WTC11 (cell line): ENCODE measurements at regions of chr4 and their contacts with region 1.

Region 1: DNA sequence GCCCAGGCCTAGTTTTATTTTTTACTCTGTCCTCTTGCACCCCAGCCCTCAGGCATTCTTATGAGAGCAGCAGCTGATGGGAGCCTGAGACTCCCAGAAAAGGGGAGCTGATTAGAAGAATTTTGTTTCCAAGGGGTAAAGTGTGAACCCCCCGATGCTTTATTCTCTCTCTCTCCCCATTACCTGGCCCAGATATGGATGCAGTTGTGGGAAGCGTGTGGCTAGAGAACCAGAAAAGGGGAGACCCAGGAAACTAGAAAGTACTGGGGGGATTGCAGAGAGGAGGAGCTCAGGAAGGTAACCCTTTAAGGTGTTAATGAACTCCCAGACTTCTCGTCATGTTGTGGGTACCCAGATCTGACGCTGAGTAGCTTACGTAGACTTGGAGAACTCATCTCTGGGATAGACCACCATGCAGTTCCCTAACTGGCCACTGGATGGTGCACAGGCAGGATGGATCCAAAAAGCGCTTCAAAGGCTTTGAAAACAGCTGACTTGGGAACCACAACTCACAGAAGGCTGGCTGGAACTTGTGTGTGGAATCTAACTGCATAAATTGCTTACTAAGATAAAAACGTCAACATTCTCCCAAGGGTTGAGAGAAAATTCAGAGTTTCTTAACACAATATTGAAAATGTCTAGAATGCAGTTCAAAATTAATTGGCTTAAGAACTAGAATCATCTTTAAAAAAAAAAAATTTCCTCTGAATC is 64.7 kb downstream of the TBC1D14 start:
- DNase-seq: peak; percentile 95
- ATAC-seq: peak; percentile 80
- H3K4me3 Mint-ChIP-seq: no peak overlapping the region
- H3K27ac Mint-ChIP-seq: peak overlapping the region; percentile 78
- H3K4me1 Mint-ChIP-seq: peaks cover 37% of the 10 kb centered on the region
- H3K27me3 Mint-ChIP-seq: no peaks in the 10 kb centered on the region
- CTCF ChIP-seq: peak; percentile 95

Region 2: DNA sequence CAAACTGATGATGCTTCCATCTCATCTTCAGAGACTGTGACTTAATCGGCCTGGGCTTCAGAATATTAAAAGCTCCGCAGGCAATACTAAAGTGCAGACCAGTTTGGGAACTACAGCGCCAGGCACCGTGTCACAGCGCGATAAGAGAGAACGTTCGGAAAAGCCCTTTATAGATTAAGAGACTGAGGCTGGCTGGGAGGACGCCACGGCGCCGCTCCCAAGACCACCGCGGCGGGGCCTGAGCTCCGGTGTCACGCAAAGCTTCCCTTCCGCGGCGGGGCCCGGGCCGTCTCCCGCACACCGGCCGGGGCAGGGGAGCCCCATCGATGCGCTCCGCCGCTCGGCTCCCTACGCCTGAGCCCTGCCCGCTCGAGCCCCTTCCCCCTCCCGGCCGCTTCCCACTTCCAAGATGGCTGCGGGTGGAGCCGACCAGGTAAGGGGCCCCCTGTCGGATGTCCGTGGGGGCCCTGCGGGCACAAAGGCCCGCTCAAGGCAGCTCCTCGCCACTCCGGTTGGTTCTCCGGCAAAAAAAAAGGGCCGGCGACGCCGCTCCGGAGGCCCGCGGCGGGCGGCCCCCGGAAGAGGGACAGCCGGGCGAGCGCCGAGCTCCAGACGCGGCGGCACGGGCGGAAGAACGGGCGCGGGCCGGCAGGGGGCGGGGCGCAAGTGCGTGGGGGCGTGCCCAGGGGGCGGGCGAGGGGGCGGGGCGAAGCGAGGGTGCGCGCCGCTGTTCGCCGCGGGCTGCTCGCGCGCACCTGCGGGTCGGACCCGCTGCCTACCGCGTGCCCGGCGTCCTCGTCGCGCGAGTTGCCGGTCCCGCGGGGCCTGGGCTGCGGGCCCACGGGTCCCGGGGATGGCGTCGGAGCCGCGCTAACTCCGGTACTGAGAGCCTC is 65.0 kb before region 1 on chr4 and contains the start of gene TBC1D14:
- CTCF ChIA-PET with region 1: interaction called, 26 read pairs
- POLR2A ChIA-PET with region 1: interaction called, 5 read pairs
- DNase-seq: peak; percentile 85
- ATAC-seq: peak; percentile 83
- H3K4me3 Mint-ChIP-seq: peak within 1 kb of the TSS; percentile 95
- H3K27ac Mint-ChIP-seq: peak within 1 kb of the TSS; percentile 69
- H3K4me1 Mint-ChIP-seq: peaks cover 33% of the 10 kb centered on the region
- H3K27me3 Mint-ChIP-seq: peaks cover 12% of the 10 kb centered on the region
- CTCF ChIP-seq: no peak
- total RNA-seq, gene TBC1D14: 42.4 to 45.1 TPM (median 43.4 TPM) in 3 replicates

Region 3: GRCh38 chr4:6917461-6918271 is 56.6 kb before region 1 on chr4:
- CTCF ChIA-PET with region 1: interaction called, 14 read pairs
- POLR2A ChIA-PET with region 1: no interaction called
- DNase-seq: peak; percentile 69
- ATAC-seq: peak; percentile 78
- H3K4me3 Mint-ChIP-seq: no peak overlapping the region
- H3K27ac Mint-ChIP-seq: peak overlapping the region; percentile 81
- H3K4me1 Mint-ChIP-seq: peaks cover 32% of the 10 kb centered on the region
- H3K27me3 Mint-ChIP-seq: no peaks in the 10 kb centered on the region
- CTCF ChIP-seq: peak; percentile 39; the same call in 1 of the 2 replicates

Region 4: GRCh38 chr4:6942238-6942800 is 32.0 kb before region 1 on chr4:
- CTCF ChIA-PET with region 1: interaction called, 16 read pairs
- POLR2A ChIA-PET with region 1: no interaction called
- DNase-seq: no peak
- ATAC-seq: no peak
- H3K4me3 Mint-ChIP-seq: no peak overlapping the region
- H3K27ac Mint-ChIP-seq: peak overlapping the region; percentile 89
- H3K4me1 Mint-ChIP-seq: peaks cover 74% of the 10 kb centered on the region
- H3K27me3 Mint-ChIP-seq: no peaks in the 10 kb centered on the region
- CTCF ChIP-seq: no peak

Region 5: DNA sequence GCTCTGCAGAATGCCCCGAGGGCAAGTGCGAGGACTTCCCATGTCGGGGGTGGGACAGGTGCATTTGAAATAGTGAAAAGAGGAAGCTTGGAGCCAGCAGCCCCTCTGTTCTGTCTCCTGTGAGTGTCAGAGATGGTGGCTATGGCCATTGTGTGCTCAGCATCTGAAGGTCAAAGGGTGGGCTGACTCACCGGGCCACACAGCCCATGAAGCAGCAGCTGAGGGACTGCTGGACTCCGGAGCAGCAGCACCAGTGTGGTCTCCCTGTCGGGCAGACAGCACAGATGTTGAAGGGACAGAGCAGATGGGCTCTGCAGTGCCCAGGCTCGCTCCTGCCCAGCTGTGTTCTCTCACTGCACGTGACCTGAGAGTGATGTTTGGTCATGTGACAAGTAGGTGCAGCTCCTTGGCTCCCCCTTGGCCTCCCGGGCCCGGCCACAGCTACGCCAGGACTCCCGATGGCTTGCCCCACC is 11.1 kb before region 1 on chr4:
- CTCF ChIA-PET with region 1: interaction called, 22 read pairs
- POLR2A ChIA-PET with region 1: interaction called, 3 read pairs
- DNase-seq: no peak
- ATAC-seq: peak; percentile 7; the same call in 1 of the 2 replicates
- H3K4me3 Mint-ChIP-seq: no peak overlapping the region
- H3K27ac Mint-ChIP-seq: peak overlapping the region; percentile 80; the same call in 1 of the 2 replicates
- H3K4me1 Mint-ChIP-seq: peaks cover 40% of the 10 kb centered on the region
- H3K27me3 Mint-ChIP-seq: no peaks in the 10 kb centered on the region
- CTCF ChIP-seq: no peak

Region 6: DNA sequence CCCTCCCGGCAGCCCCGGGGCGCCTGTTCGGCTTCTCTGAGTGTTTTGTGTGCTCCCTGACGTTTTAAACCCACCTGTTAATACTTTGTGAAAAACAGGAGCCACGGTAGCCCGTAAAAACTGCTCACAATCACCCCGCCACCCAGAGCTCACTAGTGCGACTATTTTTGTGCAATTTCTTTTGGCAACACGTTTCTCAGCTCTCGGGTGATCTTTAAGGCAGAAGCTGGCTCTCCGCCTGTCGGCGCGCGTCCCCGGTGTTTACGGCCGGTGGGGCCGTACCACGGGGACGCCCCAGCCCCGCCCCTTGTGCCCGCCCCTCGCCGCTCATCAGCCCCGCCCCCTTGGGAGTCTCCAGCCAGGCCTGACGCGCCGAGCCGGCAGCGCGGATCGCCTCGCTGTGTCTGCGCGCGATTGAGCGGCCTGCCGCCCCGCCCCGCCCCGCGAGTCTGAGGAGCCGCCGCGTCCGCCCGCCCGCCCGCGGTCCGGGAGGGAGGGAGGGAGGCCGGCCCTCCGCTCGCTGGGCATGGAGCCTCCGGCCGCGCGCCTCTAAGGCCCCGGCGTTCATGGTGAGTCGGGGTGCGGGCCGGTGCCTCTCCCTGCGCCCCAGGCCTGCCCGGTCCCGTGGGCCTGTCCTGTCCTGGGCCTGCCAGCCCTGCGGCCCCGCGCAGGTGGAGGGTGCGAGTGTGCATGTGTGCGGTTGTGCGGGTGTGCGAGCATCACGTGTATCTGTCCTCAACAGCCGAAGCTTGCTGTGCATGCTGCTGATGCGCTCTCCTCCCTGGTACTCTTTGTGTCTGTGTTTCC is 12.7 kb after region 1 on chr4:
- CTCF ChIA-PET with region 1: interaction called, 47 read pairs
- POLR2A ChIA-PET with region 1: interaction called, 12 read pairs
- DNase-seq: peak; percentile 94
- ATAC-seq: peak; percentile 89
- H3K4me3 Mint-ChIP-seq: peak overlapping the region; percentile 99
- H3K27ac Mint-ChIP-seq: peak overlapping the region; percentile 99
- H3K4me1 Mint-ChIP-seq: peaks cover 40% of the 10 kb centered on the region
- H3K27me3 Mint-ChIP-seq: no peaks in the 10 kb centered on the region; the same call in 1 of the 2 replicates
- CTCF ChIP-seq: no peak